ENCODE measurements at regions of chr5 and their contacts with region 1.

Region 1: DNA sequence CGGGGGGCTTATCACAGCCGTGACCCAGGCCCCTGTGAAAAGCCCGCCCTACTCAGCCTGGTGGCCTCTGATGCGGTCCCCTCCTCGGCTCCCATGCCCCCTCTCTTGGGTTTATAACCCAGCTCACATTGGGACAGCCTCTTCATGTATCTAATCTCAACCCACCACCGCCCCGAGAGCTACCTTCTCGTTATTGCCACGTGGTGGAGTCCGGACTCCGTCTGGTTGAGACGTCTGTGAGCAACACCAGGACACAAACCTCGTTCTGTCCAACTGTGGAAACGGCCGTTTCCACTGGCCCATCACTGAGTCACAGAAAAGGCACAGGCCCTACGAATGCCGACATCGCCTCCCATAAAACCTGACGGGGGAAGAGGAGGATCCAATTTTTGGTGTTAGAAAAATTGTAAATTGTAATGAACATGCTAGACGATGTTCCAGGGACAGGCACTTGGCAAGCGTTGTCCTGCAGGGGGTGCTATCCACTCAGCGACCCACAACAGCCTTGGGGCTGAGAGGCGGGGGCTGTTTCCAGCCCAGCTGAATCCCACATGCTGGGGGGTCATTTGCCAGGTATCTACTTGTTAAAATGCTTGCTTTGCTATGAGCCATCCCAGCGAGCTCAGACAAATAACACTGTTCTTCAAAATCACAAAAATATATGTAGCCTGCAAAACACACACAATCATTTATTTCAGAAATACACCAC is 37.3 kb upstream of the N4BP3 start:
- DNase-seq: peak; percentile 85
- H3K4me3 Mint-ChIP-seq: peak overlapping the region; percentile 44
- H3K27ac Mint-ChIP-seq: no peak overlapping the region
- H3K4me1 Mint-ChIP-seq: no peaks in the 10 kb centered on the region
- H3K27me3 Mint-ChIP-seq: peaks cover 8% of the 10 kb centered on the region

Region 2: DNA sequence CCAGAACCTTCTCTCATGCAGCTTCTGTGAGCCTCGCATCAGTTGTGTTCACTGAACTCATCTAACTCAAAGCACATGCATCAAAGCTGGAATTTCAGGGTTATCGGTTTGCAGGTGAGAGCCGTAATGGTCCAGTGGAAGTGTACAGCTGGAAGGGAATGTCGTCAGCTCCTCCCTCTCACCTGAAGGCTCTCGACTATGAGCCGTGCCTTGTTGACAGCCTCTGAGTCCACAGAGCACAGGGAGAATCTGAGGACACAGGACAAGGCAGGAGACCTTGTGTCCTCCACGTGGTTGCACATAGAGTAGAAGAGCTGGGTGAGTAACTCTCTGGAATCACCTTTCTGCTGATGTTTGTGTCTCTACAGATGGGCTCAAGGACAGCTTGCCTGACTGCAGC is 118.8 kb before region 1 on chr5:
- CTCF ChIA-PET with region 1: no interaction called
- POLR2A ChIA-PET with region 1: no interaction called
- intact Hi-C with region 1: no loop called
- DNase-seq: no peak
- H3K4me3 Mint-ChIP-seq: no peak overlapping the region
- H3K27ac Mint-ChIP-seq: no peak overlapping the region
- H3K4me1 Mint-ChIP-seq: no peaks in the 10 kb centered on the region
- H3K27me3 Mint-ChIP-seq: no peaks in the 10 kb centered on the region

Region 3: GRCh38 chr5:178120868-178121357 is 44.9 kb after region 1 on chr5:
- CTCF ChIA-PET with region 1: interaction called, 39 read pairs
- POLR2A ChIA-PET with region 1: no interaction called
- intact Hi-C with region 1: no loop called
- DNase-seq: peak; percentile 90
- H3K4me3 Mint-ChIP-seq: no peak overlapping the region
- H3K27ac Mint-ChIP-seq: no peak overlapping the region
- H3K4me1 Mint-ChIP-seq: peaks cover 18% of the 10 kb centered on the region
- H3K27me3 Mint-ChIP-seq: no peaks in the 10 kb centered on the region

Region 4: DNA sequence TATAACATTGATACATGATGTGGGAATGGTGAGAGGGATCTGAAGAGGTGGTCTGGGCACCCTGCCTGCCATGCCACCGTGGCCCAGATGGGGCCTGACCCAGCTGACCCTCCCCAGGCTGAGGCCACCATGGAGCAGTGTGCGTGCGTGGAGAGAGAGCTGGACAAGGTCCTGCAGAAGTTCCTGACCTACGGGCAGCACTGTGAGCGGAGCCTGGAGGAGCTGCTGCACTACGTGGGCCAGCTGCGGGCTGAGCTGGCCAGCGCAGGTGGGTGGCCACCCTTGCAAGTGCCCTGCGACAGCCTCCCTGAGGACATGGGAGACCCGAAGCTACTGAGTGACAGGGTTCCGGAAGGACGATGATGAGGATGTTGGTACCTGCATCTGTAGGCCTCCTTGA is 62.0 kb after region 1 on chr5:
- CTCF ChIA-PET with region 1: interaction called, 117 read pairs
- POLR2A ChIA-PET with region 1: no interaction called
- intact Hi-C with region 1: no loop called
- DNase-seq: no peak
- H3K4me3 Mint-ChIP-seq: no peak overlapping the region
- H3K27ac Mint-ChIP-seq: no peak overlapping the region
- H3K4me1 Mint-ChIP-seq: peaks cover 12% of the 10 kb centered on the region
- H3K27me3 Mint-ChIP-seq: no peaks in the 10 kb centered on the region

Region 5: GRCh38 chr5:178153573-178154343 is 77.8 kb after region 1 on chr5 and contains the start of gene NHP2:
- CTCF ChIA-PET with region 1: interaction called, 117 read pairs
- POLR2A ChIA-PET with region 1: interaction called, 3 read pairs
- intact Hi-C with region 1: no loop called
- DNase-seq: peak; percentile 99
- H3K4me3 Mint-ChIP-seq: peak within 1 kb of the TSS; percentile 93
- H3K27ac Mint-ChIP-seq: peak within 1 kb of the TSS; percentile 88
- H3K4me1 Mint-ChIP-seq: peaks cover 48% of the 10 kb centered on the region
- H3K27me3 Mint-ChIP-seq: no peaks in the 10 kb centered on the region
- total RNA-seq, gene NHP2: 231 to 246 TPM

Region 6: GRCh38 chr5:178428341-178428964 is 352.5 kb after region 1 on chr5:
- CTCF ChIA-PET with region 1: no interaction called
- POLR2A ChIA-PET with region 1: no interaction called
- intact Hi-C with region 1: no loop called
- DNase-seq: no peak
- H3K4me3 Mint-ChIP-seq: no peak overlapping the region
- H3K27ac Mint-ChIP-seq: no peak overlapping the region
- H3K4me1 Mint-ChIP-seq: no peaks in the 10 kb centered on the region
- H3K27me3 Mint-ChIP-seq: no peaks in the 10 kb centered on the region